ENCODE measurements at regions of chr1 and their contacts with region 1.

Region 1: DNA sequence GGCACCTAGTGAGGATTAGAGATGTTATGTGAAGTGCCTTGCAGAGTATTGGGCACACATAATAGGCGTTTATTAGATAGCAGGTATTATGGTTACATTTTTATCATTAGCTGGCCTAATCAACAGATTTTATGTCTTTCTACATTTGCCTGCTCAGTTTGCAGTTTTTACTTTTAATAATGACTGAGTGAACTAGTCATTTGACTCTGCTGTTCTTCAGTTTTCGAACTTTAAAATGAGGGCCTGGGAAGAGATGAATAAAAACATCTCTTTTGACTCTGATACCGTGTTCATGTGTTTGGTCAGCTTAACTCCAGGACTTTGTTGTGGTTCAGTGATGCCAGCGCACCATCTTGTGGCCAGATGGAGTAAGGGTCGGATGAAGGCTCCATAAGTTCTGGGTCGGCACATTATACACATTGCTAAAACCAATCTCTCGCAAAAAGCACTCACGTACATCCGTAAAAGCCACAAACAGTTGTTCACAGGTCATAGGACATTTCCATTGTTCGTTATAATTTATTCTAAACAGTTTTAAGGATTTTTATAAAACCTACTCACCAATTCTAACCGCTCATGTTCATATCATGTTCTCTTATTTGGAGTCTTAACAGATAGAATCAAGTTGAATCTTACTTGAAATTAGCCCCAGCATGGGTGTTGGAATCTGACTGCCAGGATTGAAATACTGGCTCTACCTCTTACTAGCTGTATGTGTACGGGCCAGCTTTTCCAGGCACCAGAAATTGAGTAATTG is 78.4 kb upstream of the GPR88 start:
- DNase-seq: peak; percentile 68 to 82
- ATAC-seq: peak; percentile 90 to 98 (median 94)
- H3K4me3 ChIP-seq: no peak overlapping the region
- H3K27ac ChIP-seq: peak overlapping the region; percentile 33
- H3K4me1 ChIP-seq: peaks cover 3% of the 10 kb centered on the region
- H3K27me3 ChIP-seq: no peaks in the 10 kb centered on the region
- CTCF ChIP-seq: peak; percentile 90

Region 2: GRCh38 chr1:99374109-99374508 is 1085.4 kb before region 1 on chr1:
- intact Hi-C with region 1: no loop called
- DNase-seq: no peak
- ATAC-seq: no peak
- H3K4me3 ChIP-seq: no peak overlapping the region
- H3K27ac ChIP-seq: no peak overlapping the region
- H3K4me1 ChIP-seq: no peaks in the 10 kb centered on the region
- H3K27me3 ChIP-seq: no peaks in the 10 kb centered on the region
- CTCF ChIP-seq: no peak

Region 3: DNA sequence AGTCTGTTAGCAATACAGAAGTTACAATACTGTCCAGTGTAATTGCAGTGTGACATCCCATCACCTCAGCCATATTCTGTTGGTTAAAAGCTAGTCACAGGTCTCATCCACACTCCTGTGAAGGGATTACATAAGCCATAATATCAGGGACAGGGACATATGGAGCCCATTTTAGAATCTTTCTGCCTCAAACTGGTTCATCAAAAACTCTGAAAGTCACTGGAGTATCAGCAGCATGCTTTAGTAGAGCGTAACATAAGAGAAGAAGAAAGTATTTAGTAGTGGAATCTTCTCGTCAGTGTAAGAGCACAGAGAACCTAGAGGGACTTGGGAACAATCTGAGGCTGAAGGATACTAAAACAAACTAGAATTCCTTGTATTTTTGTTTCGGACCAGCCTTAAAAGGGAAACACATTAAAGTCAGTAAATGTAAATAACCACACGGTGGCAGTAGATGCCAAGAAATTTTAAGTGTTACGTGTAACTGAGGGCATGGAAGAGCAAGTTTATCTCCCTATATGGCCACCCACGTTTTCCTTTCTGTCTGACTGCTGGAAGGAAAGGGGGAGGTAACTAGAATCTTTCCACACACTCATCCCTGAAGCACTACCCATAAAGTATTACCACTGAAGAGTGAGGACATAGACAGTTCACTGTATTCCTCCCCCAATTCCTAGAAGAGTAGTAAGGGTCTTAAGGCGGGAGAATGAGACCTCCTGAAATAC is 651.0 kb before region 1 on chr1:
- intact Hi-C with region 1: loop called (anchors 5 to 10 kb)
- DNase-seq: no peak
- ATAC-seq: peak; percentile 93 to 97 (median 94)
- H3K4me3 ChIP-seq: peak overlapping the region; percentile 46
- H3K27ac ChIP-seq: peak overlapping the region; percentile 76
- H3K4me1 ChIP-seq: peaks cover 9% of the 10 kb centered on the region
- H3K27me3 ChIP-seq: peaks cover 0 to 7% (median 6%) of the 10 kb centered on the region in 3 donors
- CTCF ChIP-seq: peak; percentile 68

Region 4: GRCh38 chr1:100265931-100266740 is 193.4 kb before region 1 on chr1 and contains the start of gene RTCA:
- intact Hi-C with region 1: loop called in 1 of 2 experiments (anchors 10 kb)
- DNase-seq: peak; percentile 98 to 99
- ATAC-seq: peak; percentile 99 to 100 (median 99)
- H3K4me3 ChIP-seq: peak within 1 kb of the TSS; percentile 97
- H3K27ac ChIP-seq: peak within 1 kb of the TSS; percentile 87
- H3K4me1 ChIP-seq: peaks cover 11% of the 10 kb centered on the region
- H3K27me3 ChIP-seq: no peaks in the 10 kb centered on the region
- CTCF ChIP-seq: no peak
- total RNA-seq, gene RTCA: 24.0 to 33.4 (median 33.0) TPM

Region 5: GRCh38 chr1:100277866-100278265 is 181.7 kb before region 1 on chr1:
- intact Hi-C with region 1: loop called in 1 of 2 experiments (anchors 10 kb)
- DNase-seq: no peak
- ATAC-seq: no peak
- H3K4me3 ChIP-seq: no peak overlapping the region
- H3K27ac ChIP-seq: no peak overlapping the region
- H3K4me1 ChIP-seq: peaks cover 17% of the 10 kb centered on the region
- H3K27me3 ChIP-seq: no peaks in the 10 kb centered on the region
- CTCF ChIP-seq: no peak

Region 6: GRCh38 chr1:100443811-100444571 is 15.5 kb before region 1 on chr1:
- intact Hi-C with region 1: no loop called
- DNase-seq: no peak
- ATAC-seq: peak; percentile 44 to 74 (median 64)
- H3K4me3 ChIP-seq: peak overlapping the region; percentile 19
- H3K27ac ChIP-seq: peak overlapping the region; percentile 63
- H3K4me1 ChIP-seq: peaks cover 31% of the 10 kb centered on the region
- H3K27me3 ChIP-seq: no peaks in the 10 kb centered on the region
- CTCF ChIP-seq: no peak

Region 7: DNA sequence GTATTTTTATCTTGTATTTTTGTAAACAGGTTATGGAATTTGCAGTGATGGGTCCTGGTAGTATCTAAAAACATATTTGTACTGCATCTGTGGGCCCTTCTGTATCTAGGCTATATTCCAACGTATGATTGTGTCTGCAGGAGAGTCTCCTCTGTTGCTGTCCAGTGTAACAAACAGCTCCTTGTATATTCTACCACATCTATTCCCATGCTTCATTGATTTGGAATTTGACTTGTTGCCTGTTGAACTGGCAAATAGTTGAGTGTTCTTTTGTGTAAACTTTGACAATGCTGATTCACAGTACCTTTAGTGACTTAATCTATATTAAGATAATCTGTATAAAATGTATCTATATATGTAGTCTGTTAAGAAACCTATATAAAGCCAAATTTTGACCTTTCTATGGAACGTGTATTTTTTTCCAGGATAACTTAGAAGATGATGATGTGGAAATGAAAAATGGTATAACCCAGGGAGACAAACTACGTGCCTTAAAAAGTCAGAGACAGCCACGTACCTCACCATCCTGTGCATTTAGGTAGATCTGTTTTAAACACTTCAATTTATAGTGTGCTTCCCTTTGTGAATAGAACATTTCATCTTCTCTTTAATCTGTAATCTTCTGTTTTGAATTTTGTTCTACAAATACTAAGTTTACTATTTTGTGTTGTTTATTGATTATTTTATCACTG is 35.0 kb after region 1 on chr1:
- intact Hi-C with region 1: no loop called
- DNase-seq: no peak
- ATAC-seq: no peak
- H3K4me3 ChIP-seq: no peak overlapping the region
- H3K27ac ChIP-seq: no peak overlapping the region
- H3K4me1 ChIP-seq: no peaks in the 10 kb centered on the region
- H3K27me3 ChIP-seq: no peaks in the 10 kb centered on the region
- CTCF ChIP-seq: no peak

Region 8: GRCh38 chr1:100565533-100565932 is 106.0 kb after region 1 on chr1:
- intact Hi-C with region 1: no loop called
- DNase-seq: no peak
- ATAC-seq: no peak
- H3K4me3 ChIP-seq: no peak overlapping the region
- H3K27ac ChIP-seq: no peak overlapping the region
- H3K4me1 ChIP-seq: no peaks in the 10 kb centered on the region
- H3K27me3 ChIP-seq: no peaks in the 10 kb centered on the region
- CTCF ChIP-seq: no peak

Measured in psoas muscle (tissue), 8 donors.